IMR-90 (cell line): ENCODE measurements at regions of chr1 and their contacts with region 1.

Region 1: DNA sequence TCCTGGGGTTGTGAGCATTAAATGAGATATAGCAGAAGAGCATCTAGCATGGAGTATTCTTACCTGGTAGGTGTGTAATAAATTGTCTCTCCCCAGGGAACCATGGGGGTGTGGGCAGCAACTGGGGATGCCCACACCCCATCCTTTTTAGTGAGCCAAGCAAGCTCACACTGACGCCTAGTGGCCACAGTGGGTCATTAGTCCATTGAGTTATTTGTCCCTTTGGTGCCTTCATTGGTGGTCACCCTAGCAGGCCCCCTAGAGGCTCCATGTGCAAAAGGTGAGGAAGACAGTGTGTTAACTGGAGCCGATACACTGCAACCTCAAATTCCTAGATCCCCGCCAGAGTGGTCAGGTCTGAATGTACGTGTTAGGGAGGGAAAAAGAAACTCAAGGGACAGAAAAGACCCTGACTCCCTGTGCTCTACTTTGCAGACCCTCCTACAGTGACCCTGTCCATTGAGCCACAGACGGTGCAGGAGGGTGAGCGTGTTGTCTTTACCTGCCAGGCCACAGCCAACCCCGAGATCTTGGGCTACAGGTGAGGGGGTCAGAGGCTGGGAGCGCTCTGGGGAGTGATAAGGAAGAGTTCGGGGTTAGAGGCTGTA is 93.3 kb upstream of the CD1D start:
- DNase-seq: peak; percentile 77
- ATAC-seq: peak; percentile 95
- H3K4me3 ChIP-seq: no peak overlapping the region
- H3K27ac ChIP-seq: no peak overlapping the region
- H3K4me1 ChIP-seq: no peaks in the 10 kb centered on the region
- H3K27me3 ChIP-seq: no peaks in the 10 kb centered on the region
- CTCF ChIP-seq: peak; percentile 99
- POLR2A ChIP-seq: peak; percentile 43; the same call in 1 of the 2 replicates
- RAD21 ChIP-seq: peak; percentile 97

Region 2: GRCh38 chr1:157472056-157472698 is 615.2 kb before region 1 on chr1:
- CTCF ChIA-PET with region 1: no interaction called
- POLR2A ChIA-PET with region 1: no interaction called
- dilution Hi-C with region 1: no loop called
- in situ Hi-C with region 1: no loop called
- intact Hi-C with region 1: no loop called
- DNase-seq: no peak
- ATAC-seq: no peak
- H3K4me3 ChIP-seq: no peak overlapping the region
- H3K27ac ChIP-seq: no peak overlapping the region
- H3K4me1 ChIP-seq: no peaks in the 10 kb centered on the region
- H3K27me3 ChIP-seq: no peaks in the 10 kb centered on the region
- CTCF ChIP-seq: no peak
- POLR2A ChIP-seq: no peak
- RAD21 ChIP-seq: no peak

Region 3: GRCh38 chr1:157985473-157985872 is 102.0 kb before region 1 on chr1:
- CTCF ChIA-PET with region 1: interaction called, 3 read pairs
- POLR2A ChIA-PET with region 1: no interaction called
- dilution Hi-C with region 1: no loop called
- in situ Hi-C with region 1: loop called (anchors 5 kb)
- intact Hi-C with region 1: no loop called
- DNase-seq: no peak
- ATAC-seq: no peak
- H3K4me3 ChIP-seq: no peak overlapping the region
- H3K27ac ChIP-seq: no peak overlapping the region
- H3K4me1 ChIP-seq: no peaks in the 10 kb centered on the region
- H3K27me3 ChIP-seq: peaks cover 67% of the 10 kb centered on the region
- CTCF ChIP-seq: no peak
- POLR2A ChIP-seq: no peak
- RAD21 ChIP-seq: no peak